Activated CD4-positive, alpha-beta T cell treated with anti-CD3 and anti-CD28 coated beads, Interleukin-2, amount 10 ng/mL, durations not matched to agents 24 days and 14 days (primary cell): ENCODE measurements at regions of chr16 and their contacts with region 1.

Region 1: DNA sequence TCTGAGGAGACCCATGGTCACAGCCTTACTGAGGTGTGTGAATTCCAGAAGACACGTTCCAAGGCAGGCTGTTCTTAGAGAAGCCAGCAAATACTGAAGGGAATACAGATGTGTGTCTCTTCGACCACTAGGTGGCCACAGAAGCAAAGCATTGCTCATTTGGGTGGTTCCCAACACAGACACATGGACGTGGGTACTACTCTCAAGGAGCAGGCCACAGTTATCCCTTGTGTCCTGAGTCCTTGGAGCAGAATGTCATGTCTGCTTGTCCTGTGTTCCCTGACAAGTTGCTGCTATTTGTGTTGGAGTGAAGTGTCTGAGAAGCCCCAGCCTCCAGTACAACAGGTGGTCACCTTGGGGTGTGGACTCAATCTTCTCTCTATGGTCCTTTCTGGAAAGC is 30.3 kb downstream of the HMOX2 start:
- DNase-seq: peak; percentile 88
- H3K4me3 Mint-ChIP-seq: peak overlapping the region; percentile 80
- H3K27ac Mint-ChIP-seq: peak overlapping the region; percentile 87
- H3K4me1 Mint-ChIP-seq: peaks cover 44% of the 10 kb centered on the region
- H3K27me3 Mint-ChIP-seq: no peaks in the 10 kb centered on the region

Region 2: DNA sequence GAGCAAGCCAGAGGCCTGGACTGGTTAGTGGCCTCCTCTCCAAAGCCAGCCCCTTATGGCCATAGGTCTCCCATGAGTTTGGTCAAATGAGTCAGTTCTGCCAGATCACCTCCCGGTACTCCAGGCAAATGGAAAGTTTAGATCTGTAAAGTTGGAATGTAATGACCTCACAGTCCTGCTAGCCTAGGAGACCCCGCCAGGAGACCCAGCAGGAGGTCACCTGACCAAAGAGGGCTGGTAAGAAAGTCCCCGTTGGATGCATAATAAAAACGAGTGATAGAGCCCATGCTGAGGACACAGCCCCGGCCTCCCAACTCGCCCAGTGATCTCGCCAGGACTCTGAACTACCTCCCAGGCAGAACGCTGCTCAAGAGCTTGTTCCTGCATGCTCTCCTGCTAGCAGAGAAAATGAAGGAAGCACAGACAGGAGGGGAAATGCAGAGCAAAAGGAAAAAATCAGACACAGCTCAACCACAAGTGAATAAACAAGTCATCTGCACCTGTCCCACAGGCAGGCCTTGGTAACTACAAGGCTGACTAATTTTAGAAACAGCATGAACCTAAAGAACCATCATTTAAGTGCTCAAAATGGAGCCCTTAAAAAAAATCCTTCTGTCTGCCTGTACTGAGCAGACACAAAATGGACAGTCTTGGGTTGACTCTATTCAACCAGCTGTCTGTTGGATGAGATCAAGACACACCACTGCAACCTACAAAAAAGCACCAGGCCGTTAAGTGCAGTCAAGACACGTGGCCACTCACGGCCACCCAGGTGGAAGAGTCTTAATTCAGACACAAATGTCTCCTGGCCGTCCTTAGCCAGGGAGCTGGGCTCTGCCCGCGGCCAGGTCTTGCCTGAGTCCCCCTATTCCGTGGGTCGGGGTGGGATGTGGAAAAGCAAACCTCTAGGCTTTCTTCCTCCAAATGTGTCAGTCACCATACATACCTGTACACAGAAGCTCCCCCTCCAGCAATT is 22.9 kb after region 1 on chr16:
- intact Hi-C with region 1: no loop called
- DNase-seq: peak; percentile 76
- H3K4me3 Mint-ChIP-seq: peak overlapping the region; percentile 56
- H3K27ac Mint-ChIP-seq: peak overlapping the region; percentile 92
- H3K4me1 Mint-ChIP-seq: peaks cover 35% of the 10 kb centered on the region
- H3K27me3 Mint-ChIP-seq: no peaks in the 10 kb centered on the region

Region 3: DNA sequence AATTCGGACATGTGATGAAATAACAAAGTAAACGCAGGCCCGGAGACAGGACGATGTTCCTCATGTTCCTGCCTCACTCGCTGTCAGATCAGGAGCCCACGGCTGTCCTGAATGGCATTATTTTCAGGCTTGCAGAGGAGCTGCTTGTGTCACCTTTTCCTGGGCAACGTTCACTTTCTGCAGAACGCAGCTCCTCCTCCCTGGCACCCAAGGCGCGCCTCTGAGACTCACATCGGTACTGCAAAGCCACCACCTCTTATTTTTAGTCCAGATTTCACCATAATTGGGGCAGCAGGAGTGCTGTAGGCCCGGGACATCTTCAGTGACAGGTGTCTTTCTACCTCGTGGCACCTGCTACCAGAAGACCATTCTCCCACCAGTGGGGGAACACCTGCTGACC is 41.7 kb after region 1 on chr16:
- intact Hi-C with region 1: loop called (anchors 1 kb)
- DNase-seq: no peak
- H3K4me3 Mint-ChIP-seq: no peak overlapping the region
- H3K27ac Mint-ChIP-seq: no peak overlapping the region
- H3K4me1 Mint-ChIP-seq: peaks cover 7% of the 10 kb centered on the region
- H3K27me3 Mint-ChIP-seq: peaks cover 19% of the 10 kb centered on the region

Region 4: GRCh38 chr16:4580245-4580644 is 73.8 kb after region 1 on chr16:
- intact Hi-C with region 1: loop called (anchors 1 kb)
- DNase-seq: no peak
- H3K4me3 Mint-ChIP-seq: no peak overlapping the region
- H3K27ac Mint-ChIP-seq: no peak overlapping the region
- H3K4me1 Mint-ChIP-seq: no peaks in the 10 kb centered on the region
- H3K27me3 Mint-ChIP-seq: no peaks in the 10 kb centered on the region

Region 5: DNA sequence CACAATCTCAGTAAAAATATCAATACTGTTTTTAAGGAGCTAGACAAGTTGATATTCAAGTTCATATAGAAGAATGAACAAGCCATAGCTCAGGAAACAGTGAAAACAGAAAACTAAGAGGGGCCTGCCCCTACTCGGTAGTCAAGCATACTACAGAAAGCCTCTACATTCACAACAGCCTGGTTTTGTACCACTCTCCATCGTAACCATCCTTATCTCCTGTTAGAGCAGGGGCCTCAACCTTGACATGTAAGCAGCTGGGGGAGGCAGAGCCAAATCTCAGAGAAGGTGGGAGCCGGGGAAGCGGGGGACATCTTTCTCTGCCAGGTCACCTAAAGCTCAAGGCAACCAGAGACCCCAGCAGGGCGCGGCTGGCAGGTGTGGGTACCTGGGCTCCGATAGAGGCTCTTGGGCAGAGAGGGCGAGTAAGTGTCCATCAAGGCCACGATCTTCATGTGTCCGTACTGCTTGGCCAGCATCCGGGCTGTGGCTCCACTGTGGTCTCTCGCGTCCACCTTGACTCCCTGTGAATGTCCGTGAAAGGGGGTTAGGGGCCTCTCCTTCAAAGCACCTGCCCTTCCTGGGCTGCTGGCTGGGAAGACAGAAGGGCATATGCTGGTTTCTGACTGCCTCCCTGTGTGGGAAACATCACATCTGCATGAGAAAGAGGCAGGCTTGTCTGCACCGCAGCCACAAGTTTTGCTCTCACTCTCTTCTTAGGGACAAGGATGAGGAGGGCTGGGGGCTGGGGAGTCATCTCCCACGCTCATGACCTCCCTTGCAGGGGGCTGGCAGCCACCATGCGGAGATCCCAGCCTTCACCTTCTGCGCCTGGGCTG is 207.4 kb after region 1 on chr16:
- intact Hi-C with region 1: no loop called
- DNase-seq: no peak
- H3K4me3 Mint-ChIP-seq: no peak overlapping the region
- H3K27ac Mint-ChIP-seq: no peak overlapping the region
- H3K4me1 Mint-ChIP-seq: no peaks in the 10 kb centered on the region
- H3K27me3 Mint-ChIP-seq: no peaks in the 10 kb centered on the region